ENCODE measurements at regions of chr12 and their contacts with region 1.

Region 1: DNA sequence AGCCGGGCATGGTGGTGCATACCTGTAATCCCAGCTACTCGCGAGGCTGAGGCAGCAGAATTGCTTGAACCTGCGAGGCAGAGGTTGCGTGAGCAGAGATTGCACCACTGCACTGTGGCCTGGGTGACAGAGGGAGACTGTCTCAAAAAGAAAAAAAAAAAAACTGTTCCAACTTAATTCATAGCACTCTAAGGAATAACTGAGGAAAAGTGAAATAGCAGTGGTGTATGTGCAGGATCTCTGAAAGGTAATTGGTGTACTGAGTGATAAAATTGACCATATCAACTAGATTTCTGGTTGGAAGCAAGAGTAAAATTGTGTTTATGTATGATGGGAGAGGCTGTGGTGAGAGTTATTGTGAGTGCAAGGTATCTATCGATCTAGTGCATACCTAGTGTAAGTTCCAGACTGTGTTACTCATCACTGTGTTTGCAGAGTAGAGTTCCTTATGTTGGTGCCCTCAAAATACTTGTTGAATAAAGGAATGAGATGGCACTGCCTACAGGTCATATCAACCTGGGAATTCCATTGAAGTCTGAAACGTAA is 6.3 kb downstream of the CAND1 start:
- DNase-seq: no peak
- ATAC-seq: no peak
- H3K4me3 Mint-ChIP-seq: no peak overlapping the region
- H3K27ac Mint-ChIP-seq: no peak overlapping the region
- H3K4me1 Mint-ChIP-seq: peaks cover 77% of the 10 kb centered on the region
- H3K27me3 Mint-ChIP-seq: no peaks in the 10 kb centered on the region
- CTCF ChIP-seq: no peak

Region 2: GRCh38 chr12:67299926-67300325 is 24.5 kb after region 1 on chr12:
- CTCF ChIA-PET with region 1: no interaction called
- POLR2A ChIA-PET with region 1: no interaction called
- intact Hi-C with region 1: loop called (anchors 1 kb)
- DNase-seq: no peak
- ATAC-seq: no peak
- H3K4me3 Mint-ChIP-seq: no peak overlapping the region
- H3K27ac Mint-ChIP-seq: no peak overlapping the region
- H3K4me1 Mint-ChIP-seq: no peaks in the 10 kb centered on the region
- H3K27me3 Mint-ChIP-seq: no peaks in the 10 kb centered on the region
- CTCF ChIP-seq: no peak

Region 3: DNA sequence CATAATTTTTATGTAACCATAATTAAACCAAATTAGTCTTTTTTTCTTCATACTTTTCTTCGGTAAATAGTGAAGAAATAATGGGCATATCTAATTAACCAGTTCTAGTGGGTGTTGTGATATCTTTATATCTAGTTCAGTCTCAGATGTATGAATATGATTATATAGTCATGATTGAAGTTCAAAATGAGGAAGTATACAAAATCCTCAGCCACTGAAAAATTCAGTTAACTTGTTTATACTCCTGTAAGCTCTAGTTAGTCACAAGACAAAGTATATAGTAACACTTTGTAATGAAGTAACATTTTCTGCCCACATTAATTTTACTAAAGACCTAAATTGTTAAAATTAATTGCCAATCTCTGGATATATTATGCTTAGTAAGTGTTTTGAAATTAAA is 40.2 kb after region 1 on chr12:
- CTCF ChIA-PET with region 1: no interaction called
- POLR2A ChIA-PET with region 1: no interaction called
- intact Hi-C with region 1: loop called (anchors 5 kb)
- DNase-seq: no peak
- ATAC-seq: no peak
- H3K4me3 Mint-ChIP-seq: no peak overlapping the region
- H3K27ac Mint-ChIP-seq: no peak overlapping the region
- H3K4me1 Mint-ChIP-seq: peaks cover 6% of the 10 kb centered on the region
- H3K27me3 Mint-ChIP-seq: no peaks in the 10 kb centered on the region
- CTCF ChIP-seq: no peak

Region 4: DNA sequence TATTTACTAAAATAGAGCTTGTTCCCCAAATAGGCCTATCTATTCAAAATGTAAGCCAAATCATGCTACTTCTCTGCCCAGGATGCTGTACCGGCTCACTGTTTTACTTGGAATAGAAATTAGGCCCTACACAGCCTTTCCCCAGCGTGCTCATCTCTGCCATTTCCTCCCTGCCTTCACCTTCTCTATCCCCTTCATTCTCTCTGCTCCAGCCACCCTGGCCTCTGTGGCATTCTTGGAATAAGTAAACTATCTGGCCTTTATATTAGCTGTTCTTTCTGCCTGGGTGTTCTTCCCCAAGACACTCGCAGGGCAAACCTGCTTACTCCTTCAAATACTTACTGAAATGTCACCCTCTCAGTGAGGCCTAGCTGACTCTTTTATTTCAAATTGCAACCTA is 342.2 kb after region 1 on chr12:
- CTCF ChIA-PET with region 1: no interaction called
- POLR2A ChIA-PET with region 1: no interaction called
- intact Hi-C with region 1: no loop called
- DNase-seq: no peak
- ATAC-seq: no peak
- H3K4me3 Mint-ChIP-seq: no peak overlapping the region
- H3K27ac Mint-ChIP-seq: peak overlapping the region; percentile 26
- H3K4me1 Mint-ChIP-seq: peaks cover 18% of the 10 kb centered on the region
- H3K27me3 Mint-ChIP-seq: no peaks in the 10 kb centered on the region
- CTCF ChIP-seq: no peak

Measured in activated B cell treated with CpG ODN at 0.5 μM for 24 hours (primary cell).